CD4-positive, alpha-beta T cell (primary cell): ENCODE measurements at regions of chr17 and their contacts with region 1.

Region 1: GRCh38 chr17:64202675-64203344 is 60.2 kb downstream of the TEX2 start:
- DNase-seq: no peak
- ATAC-seq: no peak
- H3K4me3 ChIP-seq: no peak overlapping the region
- H3K4me3 Mint-ChIP-seq: no peak overlapping the region
- H3K27ac ChIP-seq: no peak overlapping the region
- H3K27ac Mint-ChIP-seq: no peak overlapping the region
- H3K4me1 ChIP-seq: peaks cover 6% of the 10 kb centered on the region
- H3K4me1 Mint-ChIP-seq: peaks cover 48% of the 10 kb centered on the region
- H3K27me3 ChIP-seq: no peaks in the 10 kb centered on the region
- H3K27me3 Mint-ChIP-seq: no peaks in the 10 kb centered on the region
- CTCF ChIP-seq: no peak

Region 2: DNA sequence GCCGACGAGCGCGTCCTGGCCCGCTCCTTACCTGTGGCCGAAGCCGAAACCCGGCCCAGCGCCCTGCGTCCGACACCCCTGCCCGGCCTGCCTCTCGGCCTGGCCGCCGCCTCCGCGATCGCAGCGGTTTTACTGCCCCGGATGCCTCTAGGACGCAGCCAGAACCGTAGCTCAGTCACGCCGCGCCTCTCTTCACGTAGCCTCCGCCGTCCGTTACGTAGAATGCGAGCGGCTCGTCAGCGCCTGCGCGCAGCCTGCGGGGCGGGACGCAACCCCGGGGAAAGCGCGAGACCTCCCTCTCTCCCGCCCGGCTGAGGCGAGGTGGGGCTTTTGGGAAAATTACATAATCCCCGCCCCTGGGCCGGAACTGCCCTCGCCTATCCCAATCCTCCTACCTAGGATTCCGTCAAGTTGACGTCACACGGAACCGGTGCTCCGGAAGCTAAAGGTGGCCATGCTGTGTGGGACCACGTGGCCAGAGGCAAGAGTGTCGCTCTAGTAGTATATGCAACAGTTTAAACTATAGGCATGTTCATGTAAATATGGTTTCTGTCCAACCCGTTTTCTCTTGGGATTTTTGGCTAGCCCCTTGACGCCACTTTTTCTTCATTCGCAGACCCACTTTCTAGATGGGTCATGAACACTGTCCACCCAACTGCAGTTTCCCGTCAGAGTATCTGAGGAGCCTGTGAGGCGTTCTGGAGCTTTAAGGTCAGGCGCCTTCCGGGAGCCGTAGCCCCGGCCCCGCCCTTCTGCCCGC is 429.2 kb before region 1 on chr17 and contains the start of gene CCDC47:
- CTCF ChIA-PET with region 1: no interaction called
- POLR2A ChIA-PET with region 1: no interaction called
- intact Hi-C with region 1: no loop called
- DNase-seq: peak; percentile 94 to 100 (median 98)
- ATAC-seq: peak; percentile 80
- H3K4me3 ChIP-seq: peak within 1 kb of the TSS; percentile 67
- H3K4me3 Mint-ChIP-seq: peak within 1 kb of the TSS; percentile 99
- H3K27ac ChIP-seq: peak within 1 kb of the TSS; percentile 94 to 98
- H3K27ac Mint-ChIP-seq: peak within 1 kb of the TSS; percentile 97
- H3K4me1 ChIP-seq: peaks cover 58% of the 10 kb centered on the region
- H3K4me1 Mint-ChIP-seq: peaks cover 71% of the 10 kb centered on the region
- H3K27me3 ChIP-seq: no peaks in the 10 kb centered on the region
- H3K27me3 Mint-ChIP-seq: no peaks in the 10 kb centered on the region
- CTCF ChIP-seq: no peak
- total RNA-seq, gene CCDC47: 31.0 to 31.3 TPM

Region 3: DNA sequence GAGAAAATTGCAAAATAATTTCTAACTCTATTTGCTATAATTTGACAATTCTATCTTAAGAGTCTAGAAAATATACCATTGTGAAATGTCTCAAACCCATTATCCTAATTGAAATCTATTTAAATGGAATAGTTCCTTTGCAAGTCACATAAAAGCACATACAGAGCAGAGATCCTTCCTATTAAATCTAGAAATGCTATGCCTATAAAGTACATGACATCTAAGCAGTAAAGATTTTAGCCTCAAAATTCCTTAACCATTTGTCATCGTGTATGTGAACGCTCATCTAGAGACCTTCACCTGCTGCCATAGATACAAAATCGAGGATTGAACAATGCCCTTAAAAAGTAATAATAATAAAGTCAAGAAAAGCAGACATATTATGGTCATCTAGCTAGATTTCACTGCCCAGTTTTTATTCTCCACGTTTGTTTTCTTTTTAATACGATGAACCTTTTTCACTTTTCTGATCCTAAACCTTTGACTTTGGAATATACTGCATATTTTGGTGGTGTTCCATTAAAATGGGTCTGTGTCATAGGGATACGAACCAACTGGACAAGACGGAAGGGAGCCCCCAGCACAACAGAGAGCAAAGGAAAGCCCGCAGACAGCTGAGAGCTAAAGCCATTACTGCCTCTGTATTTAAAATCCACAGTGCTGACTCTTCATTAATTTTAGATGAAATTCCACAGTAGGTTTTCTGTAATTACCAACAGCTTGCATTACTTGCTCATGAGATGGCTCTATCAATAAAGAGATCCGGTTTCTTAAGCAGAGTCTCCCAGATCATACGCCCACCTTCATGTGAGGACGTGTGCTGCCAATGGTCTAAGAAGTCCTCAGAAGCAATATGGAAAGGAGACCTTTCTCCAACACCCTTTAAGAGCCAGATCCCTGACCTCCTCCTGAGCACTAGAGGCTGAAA is 42.7 kb after region 1 on chr17:
- CTCF ChIA-PET with region 1: no interaction called
- POLR2A ChIA-PET with region 1: no interaction called
- intact Hi-C with region 1: loop called in 1 of 2 experiments (anchors 5 kb)
- DNase-seq: no peak
- ATAC-seq: no peak
- H3K4me3 ChIP-seq: no peak overlapping the region
- H3K4me3 Mint-ChIP-seq: no peak overlapping the region
- H3K27ac ChIP-seq: no peak overlapping the region
- H3K27ac Mint-ChIP-seq: no peak overlapping the region
- H3K4me1 ChIP-seq: peaks cover under 1% of the 10 kb centered on the region
- H3K4me1 Mint-ChIP-seq: peaks cover 32% of the 10 kb centered on the region
- H3K27me3 ChIP-seq: no peaks in the 10 kb centered on the region
- H3K27me3 Mint-ChIP-seq: no peaks in the 10 kb centered on the region
- CTCF ChIP-seq: no peak

Region 4: GRCh38 chr17:64306850-64307463 is 104.1 kb after region 1 on chr17:
- CTCF ChIA-PET with region 1: no interaction called
- POLR2A ChIA-PET with region 1: no interaction called
- intact Hi-C with region 1: no loop called
- DNase-seq: peak; percentile 53 to 87 (median 64)
- ATAC-seq: peak; percentile 71
- H3K4me3 ChIP-seq: no peak overlapping the region
- H3K4me3 Mint-ChIP-seq: no peak overlapping the region
- H3K27ac ChIP-seq: no peak overlapping the region
- H3K27ac Mint-ChIP-seq: no peak overlapping the region
- H3K4me1 ChIP-seq: no peaks in the 10 kb centered on the region
- H3K4me1 Mint-ChIP-seq: no peaks in the 10 kb centered on the region
- H3K27me3 ChIP-seq: no peaks in the 10 kb centered on the region
- H3K27me3 Mint-ChIP-seq: no peaks in the 10 kb centered on the region
- CTCF ChIP-seq: peak; percentile 87